ENCODE measurements at regions of chr15 and their contacts with region 1.

Region 1: GRCh38 chr15:100627789-100628395 is 25.5 kb downstream of the ASB7 start:
- DNase-seq: peak in 4 of 5 donors; percentile 33 to 60 (median 38)
- ATAC-seq: peak; percentile 56 to 87 (median 76)
- H3K4me3 ChIP-seq: no peak overlapping the region
- H3K27ac ChIP-seq: no peak overlapping the region
- H3K4me1 ChIP-seq: peaks cover 0 to 16% (median 0%) of the 10 kb centered on the region in 12 donors
- H3K27me3 ChIP-seq: no peaks in the 10 kb centered on the region
- CTCF ChIP-seq: peak; percentile 76 to 92 (median 84)
- POLR2A ChIP-seq: no peak

Region 2: GRCh38 chr15:100879464-100880138 is 251.7 kb after region 1 on chr15 and contains the start of gene ALDH1A3:
- intact Hi-C with region 1: loop called in 3 of 10 experiments (anchors 2 to 5 kb)
- DNase-seq: peak in 3 of 5 donors; percentile 23 to 56 (median 40)
- ATAC-seq: peak in 3 of 4 donors; percentile 61 to 82 (median 67)
- H3K4me3 ChIP-seq: peak within 1 kb of the TSS; percentile 18 to 65 (median 53)
- H3K27ac ChIP-seq: peak within 1 kb of the TSS in 1 of 12 donors; percentile 40
- H3K4me1 ChIP-seq: peaks cover 0 to 21% (median 1%) of the 10 kb centered on the region in 12 donors
- H3K27me3 ChIP-seq: peaks cover 9 to 73% (median 35%) of the 10 kb centered on the region in 9 donors
- CTCF ChIP-seq: no peak
- POLR2A ChIP-seq: no peak
- total RNA-seq, gene ALDH1A3: 0.82 to 37.1 (median 4.7) TPM

Region 3: GRCh38 chr15:101008158-101009139 is 380.6 kb after region 1 on chr15:
- intact Hi-C with region 1: loop called (anchors 1 to 2 kb)
- DNase-seq: peak; percentile 70 to 92 (median 79)
- ATAC-seq: peak; percentile 82 to 89 (median 86)
- H3K4me3 ChIP-seq: peak overlapping the region in 11 of 12 donors; percentile 30 to 69 (median 50)
- H3K27ac ChIP-seq: peak overlapping the region in 1 of 12 donors; percentile 48
- H3K4me1 ChIP-seq: peaks cover 0 to 20% (median 11%) of the 10 kb centered on the region in 12 donors
- H3K27me3 ChIP-seq: no peaks in the 10 kb centered on the region
- CTCF ChIP-seq: peak; percentile 91 to 99 (median 97)
- POLR2A ChIP-seq: peak in 1 of 2 donors; percentile 14

Region 4: GRCh38 chr15:101269479-101270223 is 641.8 kb after region 1 on chr15:
- intact Hi-C with region 1: loop called in 1 of 10 experiments (anchors 10 kb)
- DNase-seq: peak in 3 of 5 donors; percentile 32 to 71 (median 62)
- ATAC-seq: peak; percentile 48 to 75 (median 62)
- H3K4me3 ChIP-seq: no peak overlapping the region
- H3K27ac ChIP-seq: peak overlapping the region in 2 of 12 donors; percentile 37 to 44
- H3K4me1 ChIP-seq: peaks cover 0 to 45% (median 12%) of the 10 kb centered on the region in 12 donors
- H3K27me3 ChIP-seq: no peaks in the 10 kb centered on the region
- CTCF ChIP-seq: peak; percentile 17 to 55 (median 36)
- POLR2A ChIP-seq: no peak